ENCODE measurements at regions of chr13 and their contacts with region 1.

Region 1: DNA sequence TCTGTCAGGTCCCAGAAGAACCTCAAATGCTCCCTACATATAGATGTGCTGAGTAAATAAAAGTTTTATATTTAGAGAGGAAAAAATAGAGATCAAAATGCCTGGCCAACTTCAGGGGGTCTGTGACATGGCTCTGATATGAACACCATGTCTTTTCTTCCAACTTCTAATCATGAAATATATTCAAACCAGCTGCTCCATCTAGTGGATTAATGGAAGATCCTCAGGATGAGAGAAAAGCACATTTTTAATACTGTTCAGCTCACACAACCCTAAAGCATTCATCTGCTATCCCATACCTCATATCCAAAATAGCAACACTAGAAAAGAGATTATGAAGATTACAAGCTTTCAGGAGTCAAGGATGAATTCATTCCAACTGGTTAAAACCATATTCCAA is 56.0 kb upstream of the DOCK9 start:
- DNase-seq: no peak
- H3K4me3 Mint-ChIP-seq: no peak overlapping the region
- H3K27ac Mint-ChIP-seq: no peak overlapping the region
- H3K4me1 Mint-ChIP-seq: peaks cover 25% of the 10 kb centered on the region
- H3K27me3 Mint-ChIP-seq: no peaks in the 10 kb centered on the region

Region 2: GRCh38 chr13:98869408-98870090 is 164.3 kb before region 1 on chr13:
- intact Hi-C with region 1: loop called (anchors 1 kb)
- DNase-seq: no peak
- H3K4me3 Mint-ChIP-seq: no peak overlapping the region
- H3K27ac Mint-ChIP-seq: no peak overlapping the region
- H3K4me1 Mint-ChIP-seq: peaks cover 25% of the 10 kb centered on the region
- H3K27me3 Mint-ChIP-seq: no peaks in the 10 kb centered on the region

Region 3: DNA sequence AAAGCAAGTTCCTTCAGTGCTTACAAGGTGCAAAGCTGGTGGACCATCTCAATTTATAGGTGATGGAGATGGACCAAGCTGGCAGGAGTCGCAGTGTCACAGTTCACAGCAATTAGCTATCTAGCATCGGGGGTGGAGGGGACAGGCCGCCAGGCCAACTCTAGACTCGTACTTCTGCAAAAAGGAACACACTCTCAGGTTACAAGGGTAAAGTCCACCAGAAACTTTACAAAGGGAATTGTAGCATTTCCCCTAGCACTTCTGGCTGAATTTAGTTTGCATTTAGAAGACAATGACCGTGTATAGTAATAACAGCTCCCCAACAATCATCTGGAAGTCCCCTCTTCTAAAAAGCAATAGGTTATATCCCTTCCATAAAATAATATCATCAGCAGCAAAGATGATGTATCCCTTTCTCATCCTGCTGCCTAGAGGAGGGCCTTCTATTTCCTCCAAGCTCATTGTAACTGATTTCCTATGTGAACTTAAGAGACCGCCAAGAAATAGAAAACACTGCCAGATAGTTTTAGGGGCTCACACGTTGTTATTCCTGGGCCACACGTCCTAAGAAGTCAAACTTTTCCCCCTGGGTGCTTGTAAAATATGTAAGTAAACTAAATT is 47.5 kb before region 1 on chr13:
- intact Hi-C with region 1: loop called (anchors 5 kb)
- DNase-seq: no peak
- H3K4me3 Mint-ChIP-seq: no peak overlapping the region
- H3K27ac Mint-ChIP-seq: no peak overlapping the region
- H3K4me1 Mint-ChIP-seq: peaks cover 49% of the 10 kb centered on the region
- H3K27me3 Mint-ChIP-seq: no peaks in the 10 kb centered on the region

Region 4: GRCh38 chr13:99057310-99057975 is 23.6 kb after region 1 on chr13:
- intact Hi-C with region 1: no loop called
- DNase-seq: no peak
- H3K4me3 Mint-ChIP-seq: no peak overlapping the region
- H3K27ac Mint-ChIP-seq: no peak overlapping the region
- H3K4me1 Mint-ChIP-seq: peaks cover 54% of the 10 kb centered on the region
- H3K27me3 Mint-ChIP-seq: no peaks in the 10 kb centered on the region